HCT116 (cell line): ENCODE measurements at regions of chr19 and their contacts with region 1.

Region 1: DNA sequence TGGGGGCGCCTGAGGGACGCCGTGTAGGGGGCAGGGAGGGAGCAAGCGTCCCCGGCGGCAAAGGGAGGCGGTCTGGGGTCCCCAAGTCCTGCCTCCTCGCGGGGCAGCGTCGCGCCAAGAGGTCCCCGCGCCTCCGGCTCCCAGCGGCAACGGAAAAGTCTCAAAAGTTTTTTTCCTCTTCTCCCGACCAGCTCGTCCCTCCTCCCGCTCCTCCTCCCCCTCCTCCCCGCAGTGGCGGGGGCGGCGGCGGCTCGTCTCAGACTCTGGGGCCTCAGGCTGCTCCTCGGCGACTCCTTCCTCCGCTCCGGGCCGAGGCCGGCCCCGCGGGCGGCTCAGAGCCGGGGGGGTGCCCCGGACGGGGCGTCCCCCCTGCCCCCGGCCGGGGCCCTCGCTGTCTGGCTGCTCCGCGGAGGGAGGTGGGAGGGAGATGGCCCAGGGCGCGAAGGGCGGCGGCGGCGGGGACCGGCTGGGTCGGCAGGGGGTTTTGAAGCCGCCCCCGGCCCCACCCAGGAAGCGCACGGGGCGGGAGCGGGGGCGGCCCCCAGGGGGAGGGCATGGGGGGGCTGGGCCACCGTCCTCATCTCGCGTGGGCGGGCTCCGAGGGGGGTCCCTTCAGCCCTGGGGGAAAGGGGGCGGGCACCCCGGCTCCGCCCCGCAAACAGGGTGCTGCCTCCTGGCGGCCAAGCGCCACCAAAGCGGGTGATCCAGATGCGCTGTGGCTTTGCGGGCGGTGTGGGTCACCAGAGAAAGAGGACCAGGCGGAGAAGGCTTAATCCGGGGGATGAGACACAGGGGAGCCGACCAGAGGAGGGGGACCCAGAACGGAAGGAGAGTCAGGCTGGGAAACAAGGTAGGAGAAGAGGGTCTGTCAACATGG is at the start of gene TGFB1:
- DNase-seq: peak; percentile 63
- ATAC-seq: peak; percentile 70
- H3K4me3 ChIP-seq: peak within 1 kb of the TSS; percentile 79 to 87
- H3K27ac ChIP-seq: peak within 1 kb of the TSS; percentile 89
- H3K4me1 ChIP-seq: peaks cover 11 to 29% of the 10 kb centered on the region in 2 experiments; a peak in 3 of 4 replicates
- H3K27me3 ChIP-seq: no peaks in the 10 kb centered on the region
- CTCF ChIP-seq: peak; percentile 56 to 88 (median 81); a peak in 5 of 6 replicates
- POLR2A ChIP-seq: no peak
- RAD21 ChIP-seq: no peak
- total RNA-seq, gene TGFB1: 54.6 TPM

Region 2: GRCh38 chr19:41218615-41219507 is 134.8 kb before region 1 on chr19 and contains the start of gene AXL:
- CTCF ChIA-PET with region 1: no interaction called
- POLR2A ChIA-PET with region 1: no interaction called
- RAD21 ChIA-PET with region 1: no interaction called
- intact Hi-C with region 1: no loop called
- DNase-seq: peak; percentile 38
- ATAC-seq: peak; percentile 72
- H3K4me3 ChIP-seq: peak within 1 kb of the TSS; percentile 64 to 93
- H3K27ac ChIP-seq: peak within 1 kb of the TSS; percentile 86
- H3K4me1 ChIP-seq: peaks cover 28 to 71% of the 10 kb centered on the region in 2 experiments
- H3K27me3 ChIP-seq: no peaks in the 10 kb centered on the region
- CTCF ChIP-seq: no peak
- POLR2A ChIP-seq: no peak
- RAD21 ChIP-seq: no peak
- total RNA-seq, gene AXL: 47.4 TPM

Region 3: DNA sequence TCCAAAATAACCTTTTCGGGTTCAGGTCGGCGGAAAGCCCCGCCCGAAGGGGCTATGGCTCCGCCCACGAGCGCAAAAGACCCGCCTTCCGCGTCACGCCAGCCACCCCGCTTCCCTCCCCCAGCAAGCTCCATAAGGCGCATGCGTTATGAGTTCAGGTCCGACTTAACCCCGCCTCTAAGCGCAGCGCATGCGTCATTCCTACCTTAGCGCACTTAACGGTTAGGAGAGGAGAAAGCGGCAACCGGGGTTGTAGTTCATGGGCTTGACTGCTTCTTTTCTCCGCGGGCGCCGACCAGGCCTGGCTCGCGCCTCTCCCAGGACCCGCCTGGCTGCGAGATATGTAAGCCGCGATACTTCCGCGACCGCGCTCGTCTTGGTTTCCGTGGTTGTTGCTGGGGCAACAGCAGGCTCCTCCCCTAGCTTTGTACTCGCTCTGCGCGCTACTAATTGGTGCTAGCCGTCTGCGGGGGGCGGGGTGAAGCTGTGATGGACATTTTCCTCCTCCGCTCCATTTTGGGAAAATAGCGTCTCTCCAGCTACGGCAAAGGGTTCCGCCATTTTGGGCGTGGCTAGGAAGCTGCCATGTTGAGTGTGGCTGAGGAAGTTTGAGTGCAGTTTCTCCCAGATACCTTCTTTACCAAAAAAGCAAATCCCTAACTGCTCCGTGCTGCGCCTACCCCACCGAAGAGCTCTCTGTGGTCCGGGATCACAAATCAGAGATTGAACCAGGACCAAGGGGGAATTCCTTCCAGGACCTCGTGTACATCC is 10.2 kb after region 1 on chr19 and contains the start of gene B9D2:
- CTCF ChIA-PET with region 1: interaction called, 54 read pairs
- POLR2A ChIA-PET with region 1: interaction called, 13 read pairs
- RAD21 ChIA-PET with region 1: interaction called in 1 of 2 experiments, 4 read pairs
- intact Hi-C with region 1: no loop called
- DNase-seq: peak; percentile 96
- ATAC-seq: peak; percentile 96
- H3K4me3 ChIP-seq: peak within 1 kb of the TSS; percentile 69 to 70
- H3K27ac ChIP-seq: peak within 1 kb of the TSS; percentile 89
- H3K4me1 ChIP-seq: peaks cover 8 to 45% of the 10 kb centered on the region in 2 experiments; a peak in 3 of 4 replicates
- H3K27me3 ChIP-seq: no peaks in the 10 kb centered on the region
- CTCF ChIP-seq: no peak
- POLR2A ChIP-seq: peak; percentile 63
- RAD21 ChIP-seq: no peak
- total RNA-seq, gene B9D2: 7.3 TPM